Activated naive CD4-positive, alpha-beta T cell treated with anti-CD3 and anti-CD28 coated beads for 36 hours (primary cell): ENCODE measurements at regions of chr17 and their contacts with region 1.

Region 1: GRCh38 chr17:64506576-64507477 is at the start of gene CEP95:
- DNase-seq: peak; percentile 95
- H3K4me3 Mint-ChIP-seq: peak within 1 kb of the TSS; percentile 92
- H3K27ac Mint-ChIP-seq: peak within 1 kb of the TSS; percentile 99
- H3K4me1 Mint-ChIP-seq: peaks cover 53% of the 10 kb centered on the region
- H3K27me3 Mint-ChIP-seq: no peaks in the 10 kb centered on the region
- total RNA-seq, gene CEP95: 38.8 to 43.3 TPM

Region 2: GRCh38 chr17:63741221-63742049 is 765.4 kb before region 1 on chr17 and contains the start of gene STRADA:
- CTCF ChIA-PET with region 1: no interaction called
- intact Hi-C with region 1: loop called (anchors 1 kb)
- DNase-seq: peak; percentile 100
- H3K4me3 Mint-ChIP-seq: peak within 1 kb of the TSS; percentile 95
- H3K27ac Mint-ChIP-seq: peak within 1 kb of the TSS; percentile 99
- H3K4me1 Mint-ChIP-seq: peaks cover 20% of the 10 kb centered on the region
- H3K27me3 Mint-ChIP-seq: no peaks in the 10 kb centered on the region
- total RNA-seq, gene STRADA: 73.2 to 76.3 TPM

Region 3: GRCh38 chr17:64262417-64263260 is 244.2 kb before region 1 on chr17 and contains the start of gene TEX2:
- CTCF ChIA-PET with region 1: no interaction called
- intact Hi-C with region 1: loop called (anchors 2 kb)
- DNase-seq: peak; percentile 76
- H3K4me3 Mint-ChIP-seq: peak within 1 kb of the TSS; percentile 90
- H3K27ac Mint-ChIP-seq: peak within 1 kb of the TSS; percentile 88
- H3K4me1 Mint-ChIP-seq: peaks cover 39% of the 10 kb centered on the region
- H3K27me3 Mint-ChIP-seq: no peaks in the 10 kb centered on the region
- total RNA-seq, gene TEX2: 9.2 to 10.6 TPM

Region 4: DNA sequence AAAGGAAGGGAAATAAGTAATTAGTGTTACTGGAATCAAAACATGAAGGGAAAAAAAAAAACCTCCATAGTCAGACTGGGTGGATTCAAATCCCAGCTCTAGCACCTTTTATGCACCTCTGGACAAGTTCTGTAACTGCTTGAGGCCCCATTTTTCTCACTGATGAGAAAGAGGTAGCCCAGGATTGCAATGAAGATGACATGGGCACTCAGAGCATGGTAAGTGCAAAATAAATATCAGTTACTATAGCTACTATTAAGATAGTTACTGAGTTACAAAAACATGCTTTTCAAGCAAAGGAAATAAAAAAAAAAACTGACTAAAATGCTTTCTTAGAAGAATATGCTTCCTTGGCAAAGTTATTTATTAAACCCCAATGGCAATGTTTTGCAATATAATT is 58.7 kb after region 1 on chr17:
- CTCF ChIA-PET with region 1: no interaction called
- intact Hi-C with region 1: no loop called
- DNase-seq: no peak
- H3K4me3 Mint-ChIP-seq: no peak overlapping the region
- H3K27ac Mint-ChIP-seq: no peak overlapping the region
- H3K4me1 Mint-ChIP-seq: peaks cover 4% of the 10 kb centered on the region
- H3K27me3 Mint-ChIP-seq: no peaks in the 10 kb centered on the region

Region 5: DNA sequence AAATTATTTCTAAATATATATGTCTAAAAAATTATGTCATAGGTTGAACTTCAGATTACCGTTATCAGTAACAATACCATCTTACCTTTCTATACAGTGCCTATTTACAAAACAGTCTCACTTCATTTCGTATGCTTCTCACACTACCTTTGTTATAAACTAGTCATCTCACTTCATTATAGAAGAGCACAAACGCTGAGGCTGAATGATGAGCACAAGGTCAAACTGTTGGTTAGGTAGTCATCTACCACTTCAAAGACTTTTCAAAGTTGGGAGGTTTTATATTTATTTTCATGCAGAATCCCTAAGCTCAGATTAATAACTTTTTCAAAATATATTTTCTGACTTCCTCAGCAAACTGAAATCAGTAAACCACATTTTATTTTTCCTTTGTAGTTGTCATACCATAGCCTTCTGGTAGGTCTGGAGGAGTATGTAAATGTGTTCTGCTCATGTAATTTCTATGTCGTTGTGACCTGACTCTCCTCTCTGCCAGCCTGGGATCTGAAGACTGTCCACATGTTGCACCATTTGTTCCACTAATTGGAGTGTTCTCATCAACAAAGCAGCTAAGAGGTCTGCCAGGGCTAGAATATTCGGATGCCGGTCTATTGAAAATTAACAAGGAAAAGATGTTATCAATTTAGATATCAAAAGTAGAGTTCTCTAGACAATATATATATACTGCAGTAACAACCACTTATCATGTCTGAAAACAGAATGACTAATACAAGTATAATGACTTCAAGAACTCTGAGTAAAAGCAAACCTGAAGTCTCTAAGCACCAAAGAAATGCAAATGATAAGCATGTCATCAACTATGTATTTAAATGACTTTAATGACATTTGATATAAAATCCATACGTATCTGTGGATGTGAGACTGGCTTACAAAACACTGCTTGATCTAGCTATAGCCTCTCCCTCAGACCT is 73.8 kb after region 1 on chr17:
- CTCF ChIA-PET with region 1: no interaction called
- intact Hi-C with region 1: loop called (anchors 2 kb)
- DNase-seq: no peak
- H3K4me3 Mint-ChIP-seq: no peak overlapping the region
- H3K27ac Mint-ChIP-seq: peak overlapping the region; percentile 82
- H3K4me1 Mint-ChIP-seq: peaks cover 13% of the 10 kb centered on the region
- H3K27me3 Mint-ChIP-seq: no peaks in the 10 kb centered on the region

Region 6: DNA sequence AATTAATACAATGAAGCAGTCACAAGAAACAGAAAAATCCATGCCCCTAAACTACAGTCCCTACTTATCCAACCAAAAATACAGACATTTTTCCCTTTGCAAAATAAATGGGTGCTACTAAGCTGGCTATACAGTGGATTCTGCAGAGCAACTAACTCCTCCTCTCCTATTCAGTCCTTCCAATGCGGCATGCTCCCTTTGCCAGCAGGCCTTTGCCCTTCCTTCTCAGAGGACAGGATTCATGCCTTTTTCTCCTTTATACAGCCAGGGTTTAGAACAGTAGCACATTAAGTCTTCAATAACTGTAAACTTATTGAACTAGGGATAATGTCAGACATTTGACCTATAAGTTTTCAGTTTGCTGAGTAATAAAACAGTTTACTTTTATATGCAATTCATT is 85.1 kb after region 1 on chr17:
- CTCF ChIA-PET with region 1: no interaction called
- intact Hi-C with region 1: no loop called
- DNase-seq: no peak
- H3K4me3 Mint-ChIP-seq: no peak overlapping the region
- H3K27ac Mint-ChIP-seq: no peak overlapping the region
- H3K4me1 Mint-ChIP-seq: peaks cover 17% of the 10 kb centered on the region
- H3K27me3 Mint-ChIP-seq: no peaks in the 10 kb centered on the region

Region 7: GRCh38 chr17:64635647-64636307 is 128.9 kb after region 1 on chr17:
- CTCF ChIA-PET with region 1: interaction called, 3 read pairs
- intact Hi-C with region 1: loop called (anchors 2 kb)
- DNase-seq: no peak
- H3K4me3 Mint-ChIP-seq: no peak overlapping the region
- H3K27ac Mint-ChIP-seq: peak overlapping the region; percentile 11
- H3K4me1 Mint-ChIP-seq: peaks cover 56% of the 10 kb centered on the region
- H3K27me3 Mint-ChIP-seq: no peaks in the 10 kb centered on the region

Region 8: DNA sequence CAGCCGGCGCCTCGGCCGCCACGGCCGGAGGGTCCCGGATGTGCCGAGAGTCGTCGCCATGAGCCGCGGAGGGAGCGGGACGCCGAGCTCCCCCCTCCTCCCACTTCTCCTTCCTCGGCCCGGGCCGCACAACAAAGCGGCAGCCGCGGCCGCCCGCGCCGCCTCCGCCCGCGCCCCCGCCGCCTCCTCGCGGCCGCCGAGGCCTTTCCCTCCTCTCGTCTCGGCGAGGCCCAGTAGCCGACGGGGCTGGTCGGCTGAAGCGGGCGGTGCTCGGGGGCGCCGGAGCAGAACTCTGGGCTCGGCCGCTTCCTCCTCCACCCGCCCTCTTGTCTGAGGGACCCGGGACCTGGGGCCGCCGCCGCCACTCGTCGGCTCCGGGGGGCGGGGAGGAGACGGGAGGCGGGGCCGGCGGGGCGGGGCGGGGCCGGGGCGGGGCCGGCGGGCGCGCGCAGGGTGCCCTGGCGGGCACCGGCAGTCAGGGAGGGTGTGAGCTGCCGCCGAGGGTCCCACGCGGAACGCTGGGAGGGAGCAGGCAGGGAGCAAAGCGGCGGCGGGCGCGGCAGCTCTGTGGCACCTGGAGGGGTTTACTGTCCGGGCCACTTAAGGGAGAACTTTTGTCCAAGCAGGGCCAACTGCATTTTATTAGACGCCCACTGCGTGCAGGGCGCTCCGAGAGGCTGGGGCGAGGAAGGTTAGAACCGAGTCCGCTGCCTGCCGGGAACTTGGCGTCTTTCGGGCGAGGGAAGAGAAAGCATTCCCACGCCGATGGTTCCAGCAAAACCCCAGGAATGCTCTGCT is 155.3 kb after region 1 on chr17 and contains the start of gene SMURF2:
- CTCF ChIA-PET with region 1: no interaction called
- intact Hi-C with region 1: loop called (anchors 2 kb)
- DNase-seq: peak; percentile 73
- H3K4me3 Mint-ChIP-seq: peak within 1 kb of the TSS; percentile 97
- H3K27ac Mint-ChIP-seq: peak within 1 kb of the TSS; percentile 91
- H3K4me1 Mint-ChIP-seq: peaks cover 23% of the 10 kb centered on the region
- H3K27me3 Mint-ChIP-seq: no peaks in the 10 kb centered on the region
- total RNA-seq, gene SMURF2: 9.6 to 10.7 TPM

Region 9: DNA sequence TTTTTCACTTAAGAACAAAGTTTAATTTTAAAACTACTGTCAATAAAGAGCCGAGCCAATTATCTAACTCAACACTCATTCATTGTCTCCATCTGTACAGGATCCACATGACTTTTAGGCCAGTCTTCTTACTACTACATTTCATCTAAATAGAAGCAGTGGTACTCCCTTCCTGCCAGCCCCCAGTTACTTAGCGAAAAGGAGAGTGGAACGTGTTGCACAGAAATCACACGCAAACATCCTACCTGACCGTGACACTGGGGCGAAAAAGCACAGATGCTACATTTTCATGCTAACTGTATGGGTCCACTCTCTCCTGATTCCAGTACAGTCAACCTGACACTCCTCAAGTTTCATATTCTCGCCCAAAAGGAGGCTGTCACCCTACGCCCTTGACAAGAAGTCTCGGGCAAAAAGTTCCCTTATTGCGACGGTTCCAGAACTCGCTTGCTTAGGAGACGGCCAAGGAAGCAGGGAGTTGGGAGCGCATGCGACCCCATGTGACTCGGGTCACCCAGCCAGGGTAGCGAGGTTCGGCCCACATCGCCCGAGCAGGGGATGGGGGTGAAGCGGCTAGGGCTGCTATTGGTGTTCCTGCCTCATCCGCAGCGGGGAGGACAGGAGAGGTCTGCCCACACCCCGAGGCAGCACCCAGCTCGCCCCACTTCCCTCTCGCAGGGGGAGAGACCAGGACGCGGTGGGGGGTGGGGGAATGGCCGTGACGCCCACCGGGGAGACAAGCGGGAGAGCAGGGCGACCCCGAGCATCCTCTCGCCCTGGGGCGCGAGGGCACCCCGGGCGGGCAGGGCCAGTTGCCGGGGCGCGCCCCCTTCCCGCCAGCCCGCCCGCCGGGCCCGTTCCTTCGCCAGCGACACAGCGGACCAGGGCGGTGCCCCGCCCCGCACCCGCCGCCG is 548.8 kb after region 1 on chr17:
- CTCF ChIA-PET with region 1: interaction called, 3 read pairs
- intact Hi-C with region 1: loop called (anchors 10 kb)
- DNase-seq: peak; percentile 55
- H3K4me3 Mint-ChIP-seq: peak overlapping the region; percentile 98
- H3K27ac Mint-ChIP-seq: peak overlapping the region; percentile 94
- H3K4me1 Mint-ChIP-seq: peaks cover 43% of the 10 kb centered on the region
- H3K27me3 Mint-ChIP-seq: no peaks in the 10 kb centered on the region